ENCODE measurements at regions of chr4 and their contacts with region 1.

Region 1: DNA sequence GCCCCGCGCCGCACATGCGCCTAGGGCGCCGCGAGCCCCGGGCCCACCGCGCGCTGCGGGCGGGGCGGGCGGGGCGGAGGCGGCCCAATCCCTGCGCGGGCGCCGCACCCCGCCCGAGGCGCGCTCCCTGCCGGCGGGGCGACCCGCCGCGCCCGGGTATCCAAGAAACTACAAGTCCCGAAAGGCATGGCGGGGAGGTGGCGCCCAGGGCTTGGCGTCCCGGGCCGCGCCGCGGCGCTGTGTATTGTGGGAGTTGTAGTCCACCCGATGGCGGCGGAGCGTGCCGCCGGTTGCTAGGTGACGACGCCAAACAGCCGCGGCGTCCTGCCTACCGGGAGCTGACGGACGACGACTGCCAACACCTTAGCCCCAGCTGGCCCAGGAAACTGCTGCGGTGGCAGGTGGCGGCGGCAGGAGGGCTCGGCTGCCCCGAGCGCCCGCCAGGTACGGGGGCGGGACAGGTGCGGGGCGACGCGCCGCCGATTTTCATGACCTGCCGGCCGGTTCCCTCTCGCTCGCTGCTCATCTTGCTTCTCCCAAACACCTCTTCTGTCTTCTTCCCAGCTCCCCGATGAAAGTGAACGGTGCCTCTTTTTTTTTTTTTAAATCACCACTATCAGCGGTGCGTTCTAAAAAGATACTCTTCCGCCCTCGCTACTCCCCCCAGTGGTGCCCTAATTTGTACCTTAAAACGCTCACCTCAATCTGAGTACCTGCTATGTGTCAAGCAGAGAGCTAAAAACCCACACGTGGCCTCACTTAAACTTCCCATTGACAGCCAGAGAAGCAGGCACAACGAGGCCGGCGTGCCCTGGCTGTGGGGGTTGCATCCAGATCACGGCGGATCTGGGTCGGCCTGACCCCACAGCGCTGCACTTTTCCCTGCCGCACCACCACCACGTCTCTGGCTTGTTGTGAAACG is at the start of gene CFAP99:
- DNase-seq: peak; percentile 87 to 99
- H3K4me3 ChIP-seq: peak within 1 kb of the TSS; percentile 76 to 86
- H3K27ac ChIP-seq: peak within 1 kb of the TSS; percentile 19 to 29
- H3K4me1 ChIP-seq: peaks cover 6 to 9% of the 10 kb centered on the region in 2 donors
- H3K27me3 ChIP-seq: no peaks in the 10 kb centered on the region
- CTCF ChIP-seq: no peak
- total RNA-seq, gene CFAP99: not detected

Region 2: DNA sequence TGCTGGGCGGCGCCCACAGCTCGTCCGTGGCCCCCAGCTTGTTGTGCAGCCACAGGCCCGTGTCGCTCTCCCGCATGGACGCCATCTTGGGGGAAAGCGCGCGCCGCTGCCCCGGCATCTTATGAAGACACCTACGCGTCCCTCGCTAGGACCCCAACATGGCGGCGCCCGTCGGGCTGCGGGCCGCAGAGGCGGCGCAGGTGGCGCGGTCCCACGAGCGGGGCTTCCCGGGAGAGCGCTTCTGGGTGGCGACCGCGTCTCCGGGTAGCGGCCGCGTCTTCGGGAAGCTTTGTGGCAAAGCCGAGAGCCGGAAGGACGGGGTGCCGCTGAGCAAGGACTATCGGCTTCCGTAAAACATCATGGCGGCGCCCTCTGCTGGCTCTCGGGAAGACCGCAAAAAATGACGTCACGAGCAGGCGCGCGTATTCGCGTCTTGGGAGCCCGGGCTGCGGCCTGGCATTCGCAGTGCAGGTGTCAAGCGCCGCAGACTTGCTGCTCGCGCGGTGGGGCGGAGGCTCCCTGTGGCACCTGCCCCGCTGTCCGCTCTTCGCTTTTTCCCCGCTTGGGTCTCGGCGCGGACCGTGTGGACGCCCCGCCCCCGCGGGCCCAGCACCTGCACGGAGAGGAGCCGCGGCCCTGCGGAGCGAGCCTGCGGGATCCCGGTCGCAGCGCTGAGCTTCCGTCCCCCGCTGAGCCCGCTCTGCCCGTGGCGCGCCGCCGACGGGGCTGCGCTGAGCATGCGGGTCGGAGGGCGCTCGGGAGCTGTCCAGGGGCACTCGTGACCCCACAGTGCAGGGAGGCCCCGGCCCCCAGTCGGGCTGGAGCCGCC is 409.8 kb before region 1 on chr4 and contains the start of gene NELFA:
- intact Hi-C with region 1: loop called (anchors 5 kb)
- DNase-seq: peak; percentile 63 to 96
- H3K4me3 ChIP-seq: peak within 1 kb of the TSS; percentile 84 to 98
- H3K27ac ChIP-seq: peak within 1 kb of the TSS; percentile 96 to 98
- H3K4me1 ChIP-seq: peaks cover 0 to 2% of the 10 kb centered on the region in 2 donors
- H3K27me3 ChIP-seq: no peaks in the 10 kb centered on the region
- CTCF ChIP-seq: peak in 2 of 3 experiments; percentile 44 to 54
- total RNA-seq, gene NELFA: 11.9 TPM

Region 3: DNA sequence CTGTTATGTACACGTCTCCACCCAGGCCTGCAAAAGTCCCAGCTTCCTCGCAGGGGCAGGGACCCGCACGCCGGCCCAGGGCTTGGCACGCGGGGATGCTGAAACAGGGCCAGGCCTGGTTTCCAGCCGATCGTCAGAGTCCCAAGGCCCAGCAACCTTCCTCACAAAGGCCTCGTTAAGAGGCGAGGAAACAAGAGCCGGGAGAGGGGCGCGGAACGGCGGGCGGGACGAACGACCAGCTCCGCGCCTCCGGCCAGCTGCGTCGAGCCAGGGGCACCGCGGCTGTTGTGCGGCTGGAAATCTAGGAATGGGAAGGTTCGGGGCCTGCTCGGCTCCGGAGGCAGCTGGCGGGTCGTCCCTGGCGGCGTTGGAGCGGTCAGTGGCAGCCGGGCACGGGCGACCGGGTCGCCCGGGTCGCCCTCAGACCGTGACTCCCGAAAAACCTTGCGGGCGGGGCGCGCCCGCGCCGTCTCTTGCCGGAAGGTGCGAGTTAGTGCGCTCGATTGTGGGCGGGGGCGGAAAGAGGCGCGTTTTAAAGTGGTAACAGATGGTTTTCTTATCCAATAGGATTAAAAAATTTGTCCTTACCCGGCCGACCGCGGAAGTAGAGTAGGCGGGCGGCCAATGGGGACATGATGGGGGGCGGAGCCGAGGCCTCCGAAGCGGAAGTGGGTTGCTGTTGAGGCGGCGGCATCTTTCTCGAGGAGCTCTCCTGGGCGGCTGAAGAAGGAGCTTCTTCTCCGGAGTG is 49.7 kb after region 1 on chr4 and contains the start of gene RNF4:
- intact Hi-C with region 1: loop called (anchors 1 kb)
- DNase-seq: peak; percentile 86 to 98
- H3K4me3 ChIP-seq: peak within 1 kb of the TSS; percentile 84 to 95
- H3K27ac ChIP-seq: peak within 1 kb of the TSS; percentile 81 to 91
- H3K4me1 ChIP-seq: peaks cover 3 to 18% of the 10 kb centered on the region in 2 donors
- H3K27me3 ChIP-seq: no peaks in the 10 kb centered on the region
- CTCF ChIP-seq: no peak
- total RNA-seq, gene RNF4: 19.3 TPM

Region 4: DNA sequence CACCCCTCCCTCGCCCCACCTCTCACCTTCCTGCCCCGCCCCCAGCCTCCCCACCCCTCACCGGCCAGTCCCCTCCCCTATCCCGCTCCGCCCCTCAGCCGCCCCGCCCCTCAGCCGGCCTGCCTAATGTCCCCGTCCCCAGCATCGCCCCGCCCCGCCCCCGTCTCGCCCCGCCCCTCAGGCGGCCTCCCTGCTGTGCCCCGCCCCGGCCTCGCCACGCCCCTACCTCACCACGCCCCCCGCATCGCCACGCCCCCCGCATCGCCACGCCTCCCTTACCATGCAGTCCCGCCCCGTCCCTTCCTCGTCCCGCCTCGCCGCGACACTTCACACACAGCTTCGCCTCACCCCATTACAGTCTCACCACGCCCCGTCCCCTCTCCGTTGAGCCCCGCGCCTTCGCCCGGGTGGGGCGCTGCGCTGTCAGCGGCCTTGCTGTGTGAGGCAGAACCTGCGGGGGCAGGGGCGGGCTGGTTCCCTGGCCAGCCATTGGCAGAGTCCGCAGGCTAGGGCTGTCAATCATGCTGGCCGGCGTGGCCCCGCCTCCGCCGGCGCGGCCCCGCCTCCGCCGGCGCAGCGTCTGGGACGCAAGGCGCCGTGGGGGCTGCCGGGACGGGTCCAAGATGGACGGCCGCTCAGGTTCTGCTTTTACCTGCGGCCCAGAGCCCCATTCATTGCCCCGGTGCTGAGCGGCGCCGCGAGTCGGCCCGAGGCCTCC is 655.3 kb after region 1 on chr4 and contains the starts of genes HTT and HTT-AS:
- intact Hi-C with region 1: loop called (anchors 10 kb)
- DNase-seq: peak; percentile 80 to 97
- H3K4me3 ChIP-seq: peak within 1 kb of the TSS; percentile 95 to 99
- H3K27ac ChIP-seq: peak within 1 kb of the TSS; percentile 86 to 98
- H3K4me1 ChIP-seq: peaks cover 12 to 14% of the 10 kb centered on the region in 2 donors
- H3K27me3 ChIP-seq: no peaks in the 10 kb centered on the region
- CTCF ChIP-seq: no peak
- total RNA-seq, gene HTT: 23.7 TPM
- total RNA-seq, gene HTT-AS: not detected

Region 5: GRCh38 chr4:3945511-3946290 is 1526.8 kb after region 1 on chr4:
- intact Hi-C with region 1: loop called (anchors 10 kb)
- DNase-seq: no peak
- H3K4me3 ChIP-seq: no peak overlapping the region
- H3K27ac ChIP-seq: no peak overlapping the region
- H3K4me1 ChIP-seq: no peaks in the 10 kb centered on the region
- H3K27me3 ChIP-seq: no peaks in the 10 kb centered on the region
- CTCF ChIP-seq: no peak

Measured in ascending aorta (tissue), 2 donors.